Heart left ventricle (tissue), 16 donors: ENCODE measurements at regions of chr15 and their contacts with region 1.

Region 1: DNA sequence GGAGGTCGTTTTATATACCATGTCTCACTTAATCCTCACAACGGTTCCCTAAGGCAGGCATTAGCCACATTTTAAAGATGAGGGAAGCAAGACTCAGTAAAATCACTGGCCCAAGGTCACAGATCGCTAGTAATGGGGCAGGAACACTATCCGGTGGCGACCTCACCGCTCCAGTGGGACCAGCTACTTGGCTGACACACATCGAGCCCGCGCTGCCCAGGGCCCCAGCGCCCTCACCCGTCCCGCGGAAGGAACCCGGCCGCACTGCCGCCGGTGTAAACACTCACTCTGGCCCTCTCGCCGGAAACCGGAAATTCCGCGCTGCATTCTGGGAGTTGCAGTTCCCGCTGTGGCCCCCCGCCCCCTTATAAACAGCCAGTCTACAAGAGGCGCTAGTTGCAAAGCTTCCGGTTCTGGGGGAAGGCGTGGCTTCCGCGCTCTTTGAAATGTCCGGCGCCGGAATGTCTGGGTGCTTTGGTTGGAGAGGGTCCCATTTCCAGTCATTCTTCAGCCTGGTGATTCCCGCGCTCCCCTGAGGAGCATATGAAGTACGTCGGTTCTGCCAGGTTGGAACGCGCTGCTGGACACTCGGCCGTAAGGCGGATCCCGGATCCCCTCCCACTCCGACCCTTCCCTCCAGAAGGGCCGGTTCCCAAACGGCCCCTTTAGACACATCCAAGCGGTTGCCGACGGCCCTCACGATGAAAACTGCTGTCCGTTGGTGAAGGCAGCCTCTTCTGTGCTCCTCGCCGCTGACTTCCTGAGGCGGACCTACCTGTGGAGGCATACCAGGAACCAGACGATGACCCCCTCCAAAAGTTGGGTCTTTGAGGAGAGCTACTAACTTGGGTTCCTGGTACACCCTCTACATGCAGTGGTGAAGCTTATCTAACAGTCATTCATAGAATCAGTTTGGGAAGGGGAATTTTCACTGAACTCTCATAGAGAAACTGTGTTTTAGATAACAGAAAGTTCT is at the start of gene UBL7:
- DNase-seq: peak; percentile 97 to 98 (median 97)
- ATAC-seq: peak; percentile 99 to 100 (median 100)
- H3K4me3 ChIP-seq: peak within 1 kb of the TSS; percentile 57 to 96 (median 78)
- H3K27ac ChIP-seq: peak within 1 kb of the TSS; percentile 49 to 94 (median 86)
- H3K4me1 ChIP-seq: peaks cover 0 to 22% (median 11%) of the 10 kb centered on the region in 12 donors
- H3K27me3 ChIP-seq: no peaks in the 10 kb centered on the region
- CTCF ChIP-seq: peak in 5 of 12 donors; percentile 19 to 47 (median 32)
- POLR2A ChIP-seq: peak; percentile 27 to 88
- total RNA-seq, gene UBL7: 40.6 to 102 (median 54.5) TPM

Region 2: GRCh38 chr15:74326451-74327145 is 134.6 kb before region 1 on chr15:
- intact Hi-C with region 1: no loop called
- DNase-seq: peak in 1 of 5 donors; percentile 37
- ATAC-seq: no peak
- H3K4me3 ChIP-seq: no peak overlapping the region
- H3K27ac ChIP-seq: no peak overlapping the region
- H3K4me1 ChIP-seq: no peaks in the 10 kb centered on the region
- H3K27me3 ChIP-seq: no peaks in the 10 kb centered on the region
- CTCF ChIP-seq: no peak
- POLR2A ChIP-seq: no peak

Region 3: GRCh38 chr15:74382004-74382816 is 78.9 kb before region 1 on chr15:
- intact Hi-C with region 1: no loop called
- DNase-seq: peak; percentile 82 to 90 (median 85)
- ATAC-seq: peak; percentile 71 to 87 (median 85)
- H3K4me3 ChIP-seq: no peak overlapping the region
- H3K27ac ChIP-seq: no peak overlapping the region
- H3K4me1 ChIP-seq: peaks cover 0 to 49% (median 28%) of the 10 kb centered on the region in 12 donors
- H3K27me3 ChIP-seq: no peaks in the 10 kb centered on the region
- CTCF ChIP-seq: peak; percentile 88 to 99 (median 96)
- POLR2A ChIP-seq: no peak

Region 4: GRCh38 chr15:74519311-74519710 is 58.2 kb after region 1 on chr15:
- intact Hi-C with region 1: no loop called
- DNase-seq: no peak
- ATAC-seq: no peak
- H3K4me3 ChIP-seq: no peak overlapping the region
- H3K27ac ChIP-seq: no peak overlapping the region
- H3K4me1 ChIP-seq: no peaks in the 10 kb centered on the region
- H3K27me3 ChIP-seq: no peaks in the 10 kb centered on the region
- CTCF ChIP-seq: no peak
- POLR2A ChIP-seq: no peak

Region 5: DNA sequence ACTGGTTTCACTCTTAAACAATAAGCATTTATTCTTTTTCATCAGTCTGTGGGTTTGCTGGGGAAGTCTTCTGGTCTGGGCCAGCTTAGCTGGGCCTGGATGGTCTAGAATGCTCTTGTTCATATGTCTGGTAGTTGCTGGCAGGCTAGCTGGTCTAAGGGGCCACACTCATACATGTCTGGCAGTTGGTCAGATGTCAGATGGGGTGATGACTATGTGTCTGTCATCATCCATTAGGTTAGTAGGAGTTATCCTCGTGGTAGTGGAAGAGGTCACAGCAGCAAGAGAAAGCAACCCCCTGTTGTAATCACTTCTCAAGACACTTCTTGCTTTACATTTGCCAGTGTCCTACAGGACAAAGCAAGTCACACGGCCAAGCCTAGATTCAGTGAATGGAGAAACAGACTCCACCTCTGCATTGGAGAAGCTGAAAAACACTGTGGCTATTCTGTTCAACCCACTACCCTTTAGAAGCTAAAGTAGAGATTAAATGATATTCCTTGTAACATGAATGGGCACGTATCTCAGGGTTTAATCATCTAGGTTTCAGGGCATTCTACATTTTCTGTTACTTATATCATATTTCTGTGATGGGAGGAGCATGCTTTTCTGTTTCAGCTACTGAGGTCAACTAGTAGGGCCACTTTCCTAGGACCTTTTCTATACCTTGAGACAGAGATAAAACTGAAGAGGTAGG is 74.4 kb after region 1 on chr15:
- intact Hi-C with region 1: loop called in 4 of 10 experiments (anchors 5 kb)
- DNase-seq: no peak
- ATAC-seq: no peak
- H3K4me3 ChIP-seq: no peak overlapping the region
- H3K27ac ChIP-seq: no peak overlapping the region
- H3K4me1 ChIP-seq: peaks cover 0 to 13% (median 11%) of the 10 kb centered on the region in 12 donors
- H3K27me3 ChIP-seq: no peaks in the 10 kb centered on the region
- CTCF ChIP-seq: no peak
- POLR2A ChIP-seq: no peak

Region 6: DNA sequence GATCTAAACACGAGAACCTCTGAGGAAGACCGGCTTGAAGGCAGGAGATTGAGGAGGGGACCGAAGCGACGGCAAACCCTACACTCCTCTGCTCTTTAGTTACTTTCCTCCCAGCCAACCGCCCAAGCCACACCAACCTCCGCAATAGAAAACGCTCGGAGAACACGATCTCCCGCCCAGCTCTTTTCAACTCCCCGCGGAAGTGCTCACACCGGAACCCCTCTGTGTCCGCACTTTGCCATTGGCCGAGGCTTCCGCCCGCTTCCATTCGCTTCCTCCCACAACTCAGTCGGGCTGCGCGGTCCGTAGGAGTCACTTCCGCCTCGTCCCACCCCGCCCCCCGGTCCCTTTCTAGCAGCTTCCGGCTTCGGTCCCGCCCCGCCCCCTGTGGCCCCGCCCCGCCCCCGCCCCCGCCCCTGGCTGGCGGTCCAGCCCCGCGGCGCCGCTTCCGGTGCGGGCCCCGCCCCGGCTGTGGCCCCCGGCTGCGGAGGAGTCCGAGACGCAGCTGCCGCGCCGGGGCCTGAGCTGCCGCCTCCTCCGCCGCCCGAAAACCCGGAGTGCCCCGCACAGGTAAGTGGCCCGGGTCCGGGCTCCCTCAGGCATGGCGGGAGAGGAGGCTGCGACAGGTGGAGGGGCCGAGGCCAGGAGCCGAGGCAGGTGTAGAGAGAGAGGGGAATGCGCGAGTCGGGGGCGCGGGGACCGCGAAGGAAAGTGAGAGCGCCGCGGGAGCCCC is 79.8 kb after region 1 on chr15 and contains the start of gene ARID3B:
- intact Hi-C with region 1: loop called in 4 of 10 experiments (anchors 5 kb)
- DNase-seq: peak; percentile 98 to 99 (median 98)
- ATAC-seq: peak; percentile 99 to 100 (median 100)
- H3K4me3 ChIP-seq: peak within 1 kb of the TSS; percentile 79 to 99 (median 92)
- H3K27ac ChIP-seq: peak within 1 kb of the TSS in 11 of 12 donors; percentile 62 to 88 (median 79)
- H3K4me1 ChIP-seq: peaks cover 0 to 43% (median 20%) of the 10 kb centered on the region in 12 donors
- H3K27me3 ChIP-seq: no peaks in the 10 kb centered on the region
- CTCF ChIP-seq: no peak
- POLR2A ChIP-seq: peak in 1 of 2 donors; percentile 46
- total RNA-seq, gene ARID3B: 1.3 to 4.3 (median 2.6) TPM